Heart right ventricle (tissue), 16 donors: ENCODE measurements at regions of chr14 and their contacts with region 1.

Region 1: GRCh38 chr14:95106971-95107370 is 50.4 kb downstream of the DICER1 start:
- DNase-seq: no peak
- ATAC-seq: no peak
- H3K4me3 ChIP-seq: no peak overlapping the region
- H3K27ac ChIP-seq: no peak overlapping the region
- H3K4me1 ChIP-seq: no peaks in the 10 kb centered on the region
- H3K27me3 ChIP-seq: no peaks in the 10 kb centered on the region
- CTCF ChIP-seq: no peak

Region 2: DNA sequence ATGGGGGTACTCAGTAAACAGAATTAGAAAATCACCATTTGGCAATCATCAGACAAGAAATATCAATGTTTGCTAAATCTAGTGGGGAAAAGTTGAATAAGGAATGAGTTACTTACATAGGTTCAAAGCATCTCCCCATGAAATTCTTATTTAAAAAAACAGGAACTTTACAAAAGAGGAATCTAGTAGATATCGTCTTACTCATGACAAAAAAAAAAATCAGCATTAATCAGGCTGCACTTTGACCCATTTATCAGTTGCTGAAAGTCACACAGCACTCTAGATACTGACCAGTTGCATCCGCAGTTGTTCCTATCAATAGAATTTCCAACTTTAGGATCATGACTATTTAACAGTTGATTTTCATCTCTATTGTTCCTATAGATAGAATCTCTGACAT is 56.2 kb after region 1 on chr14:
- intact Hi-C with region 1: no loop called
- DNase-seq: no peak
- ATAC-seq: no peak
- H3K4me3 ChIP-seq: no peak overlapping the region
- H3K27ac ChIP-seq: peak overlapping the region in 1 of 10 donors; percentile 64
- H3K4me1 ChIP-seq: peaks cover 3 to 33% (median 8%) of the 10 kb centered on the region in 9 donors
- H3K27me3 ChIP-seq: no peaks in the 10 kb centered on the region
- CTCF ChIP-seq: no peak

Region 3: DNA sequence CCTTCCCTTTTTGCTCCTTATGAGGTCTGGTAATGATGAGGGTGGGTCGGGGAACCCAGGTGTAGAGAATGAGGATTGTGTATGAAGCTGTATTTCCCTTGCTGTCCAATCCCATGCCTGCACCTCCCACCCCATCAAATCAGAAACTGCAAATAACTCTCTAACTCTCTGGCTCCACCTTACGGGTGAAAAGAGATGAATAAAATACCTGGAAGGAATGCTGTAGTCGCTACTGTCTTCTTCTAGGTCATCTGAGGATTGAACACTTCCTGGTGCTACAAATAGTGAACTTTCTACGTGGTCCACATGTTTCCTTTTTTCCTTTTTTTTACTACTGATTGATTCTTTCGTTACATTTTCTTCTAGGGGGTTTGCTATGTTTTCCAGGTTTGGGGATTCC is 89.3 kb after region 1 on chr14:
- intact Hi-C with region 1: loop called in 1 of 10 experiments (anchors 10 kb)
- DNase-seq: no peak
- ATAC-seq: peak in 4 of 8 donors; percentile 17 to 55 (median 32)
- H3K4me3 ChIP-seq: no peak overlapping the region
- H3K27ac ChIP-seq: no peak overlapping the region
- H3K4me1 ChIP-seq: peaks cover 0 to 20% (median 3%) of the 10 kb centered on the region in 9 donors
- H3K27me3 ChIP-seq: peaks cover 0 to 40% (median 23%) of the 10 kb centered on the region in 7 donors
- CTCF ChIP-seq: peak in 8 of 9 donors; percentile 12 to 57 (median 46)